Activated CD4-positive, alpha-beta T cell treated with anti-CD3 and anti-CD28 coated beads for 36 hours (primary cell): ENCODE measurements at regions of chr2 and their contacts with region 1.

Region 1: DNA sequence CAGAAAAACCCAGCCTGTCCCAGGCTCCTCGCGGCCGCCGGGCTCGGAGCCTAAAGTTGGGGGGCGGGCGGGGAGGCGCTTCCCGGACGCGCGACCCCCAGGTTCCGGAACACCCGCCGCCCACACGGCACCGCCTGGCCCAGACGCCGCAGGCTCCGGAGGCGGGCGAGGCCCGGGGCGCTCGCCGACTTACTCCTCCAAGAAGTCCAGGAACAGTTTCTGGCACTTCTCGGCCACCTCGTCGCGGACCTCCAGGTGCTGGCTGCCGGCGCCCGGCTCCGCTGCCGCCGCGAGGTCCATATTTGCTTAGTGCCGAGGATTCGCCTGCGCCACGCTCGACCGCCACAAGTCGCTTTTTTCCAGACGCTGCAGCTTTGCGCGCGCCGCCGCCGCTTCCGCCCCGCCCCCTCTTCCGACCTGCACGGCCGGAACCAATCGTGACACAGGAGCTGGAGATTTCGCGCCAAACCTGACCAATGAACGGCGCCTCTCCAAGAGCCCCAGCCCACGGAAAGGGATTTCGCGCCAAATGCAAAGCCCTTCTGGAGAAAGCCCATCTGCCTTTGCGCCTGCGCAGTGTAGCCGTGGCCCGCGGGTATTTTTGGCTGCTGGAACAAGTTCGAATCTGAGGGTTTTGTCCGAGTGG is at the start of gene MCM6:
- DNase-seq: peak; percentile 100
- ATAC-seq: peak; percentile 88
- H3K4me3 Mint-ChIP-seq: peak within 1 kb of the TSS; percentile 86
- H3K27ac Mint-ChIP-seq: peak within 1 kb of the TSS; percentile 96
- H3K4me1 Mint-ChIP-seq: peaks cover 44% of the 10 kb centered on the region
- H3K27me3 Mint-ChIP-seq: no peaks in the 10 kb centered on the region
- total RNA-seq, gene MCM6: 228 to 276 TPM

Region 2: GRCh38 chr2:134918526-134919340 is 957.5 kb before region 1 on chr2 and contains the start of gene CCNT2:
- CTCF ChIA-PET with region 1: no interaction called
- POLR2A ChIA-PET with region 1: no interaction called
- intact Hi-C with region 1: loop called in 1 of 2 experiments (anchors 2 kb)
- DNase-seq: peak; percentile 100
- ATAC-seq: peak; percentile 89
- H3K4me3 Mint-ChIP-seq: peak within 1 kb of the TSS; percentile 92
- H3K27ac Mint-ChIP-seq: peak within 1 kb of the TSS; percentile 98
- H3K4me1 Mint-ChIP-seq: peaks cover 27% of the 10 kb centered on the region
- H3K27me3 Mint-ChIP-seq: no peaks in the 10 kb centered on the region
- total RNA-seq, gene CCNT2: 29.3 to 36.6 TPM

Region 3: GRCh38 chr2:135741395-135742324 is 134.5 kb before region 1 on chr2 and contains the start of gene UBXN4:
- CTCF ChIA-PET with region 1: interaction called, 3 read pairs
- POLR2A ChIA-PET with region 1: interaction called, 7 read pairs
- intact Hi-C with region 1: loop called (anchors 1 kb)
- DNase-seq: peak; percentile 98
- ATAC-seq: peak; percentile 93
- H3K4me3 Mint-ChIP-seq: peak within 1 kb of the TSS; percentile 97
- H3K27ac Mint-ChIP-seq: peak within 1 kb of the TSS; percentile 99
- H3K4me1 Mint-ChIP-seq: peaks cover 35% of the 10 kb centered on the region
- H3K27me3 Mint-ChIP-seq: no peaks in the 10 kb centered on the region
- total RNA-seq, gene UBXN4: 97.0 to 104 TPM

Region 4: DNA sequence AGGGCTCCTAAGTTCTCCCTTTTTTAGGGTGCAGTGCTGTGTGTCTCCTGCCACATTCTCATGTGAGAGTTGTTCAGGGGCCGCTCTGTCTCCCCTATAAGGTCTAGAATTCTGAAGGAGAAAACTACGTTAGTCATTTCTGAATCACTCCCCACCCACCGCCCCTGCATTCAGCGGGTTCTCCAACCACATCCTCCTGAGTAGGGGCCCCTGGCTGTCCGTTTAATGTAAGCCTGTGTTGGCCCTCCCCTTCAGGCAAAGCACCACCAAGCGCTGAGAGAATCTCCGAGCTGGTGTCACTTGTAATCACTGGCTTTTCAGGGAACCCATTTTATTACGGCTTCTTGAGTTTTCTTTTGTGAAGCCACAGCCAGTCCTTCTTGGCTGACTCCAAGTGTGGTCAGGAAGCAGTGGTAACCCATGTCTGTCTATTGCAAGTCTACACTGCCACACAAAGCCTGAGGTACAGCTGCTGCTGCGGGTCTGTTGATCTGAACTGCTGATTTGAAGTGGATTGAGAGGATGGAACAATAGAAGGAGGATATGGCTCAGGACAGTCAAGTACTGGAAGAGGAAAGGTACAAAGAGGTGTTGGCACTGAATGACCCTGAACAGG is 56.1 kb before region 1 on chr2:
- CTCF ChIA-PET with region 1: interaction called, 3 read pairs
- POLR2A ChIA-PET with region 1: no interaction called
- intact Hi-C with region 1: loop called (anchors 1 to 2 kb)
- DNase-seq: peak; percentile 94
- ATAC-seq: peak; percentile 93
- H3K4me3 Mint-ChIP-seq: peak overlapping the region; percentile 71
- H3K27ac Mint-ChIP-seq: peak overlapping the region; percentile 87
- H3K4me1 Mint-ChIP-seq: peaks cover 45% of the 10 kb centered on the region
- H3K27me3 Mint-ChIP-seq: no peaks in the 10 kb centered on the region

Region 5: DNA sequence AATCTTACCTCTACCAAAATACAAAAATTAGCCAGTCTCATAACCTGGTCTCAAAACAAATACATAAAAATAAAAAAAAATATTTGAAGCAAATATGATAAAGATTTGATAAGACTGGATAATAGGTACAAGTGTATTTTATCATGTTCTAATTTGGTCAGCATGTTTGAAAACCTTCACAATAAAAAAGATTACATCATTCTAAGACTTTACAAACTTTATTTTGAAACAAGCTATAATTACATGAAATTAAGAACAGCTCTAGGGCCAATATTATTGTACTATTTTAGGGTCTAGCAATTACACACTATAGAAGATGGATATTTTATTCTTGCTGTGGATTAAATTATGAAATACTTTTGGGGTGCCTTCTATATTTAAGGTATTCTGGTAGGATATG is 29.5 kb after region 1 on chr2:
- CTCF ChIA-PET with region 1: no interaction called
- POLR2A ChIA-PET with region 1: no interaction called
- intact Hi-C with region 1: no loop called
- DNase-seq: no peak
- ATAC-seq: no peak
- H3K4me3 Mint-ChIP-seq: no peak overlapping the region
- H3K27ac Mint-ChIP-seq: no peak overlapping the region
- H3K4me1 Mint-ChIP-seq: peaks cover 3% of the 10 kb centered on the region
- H3K27me3 Mint-ChIP-seq: no peaks in the 10 kb centered on the region

Region 6: DNA sequence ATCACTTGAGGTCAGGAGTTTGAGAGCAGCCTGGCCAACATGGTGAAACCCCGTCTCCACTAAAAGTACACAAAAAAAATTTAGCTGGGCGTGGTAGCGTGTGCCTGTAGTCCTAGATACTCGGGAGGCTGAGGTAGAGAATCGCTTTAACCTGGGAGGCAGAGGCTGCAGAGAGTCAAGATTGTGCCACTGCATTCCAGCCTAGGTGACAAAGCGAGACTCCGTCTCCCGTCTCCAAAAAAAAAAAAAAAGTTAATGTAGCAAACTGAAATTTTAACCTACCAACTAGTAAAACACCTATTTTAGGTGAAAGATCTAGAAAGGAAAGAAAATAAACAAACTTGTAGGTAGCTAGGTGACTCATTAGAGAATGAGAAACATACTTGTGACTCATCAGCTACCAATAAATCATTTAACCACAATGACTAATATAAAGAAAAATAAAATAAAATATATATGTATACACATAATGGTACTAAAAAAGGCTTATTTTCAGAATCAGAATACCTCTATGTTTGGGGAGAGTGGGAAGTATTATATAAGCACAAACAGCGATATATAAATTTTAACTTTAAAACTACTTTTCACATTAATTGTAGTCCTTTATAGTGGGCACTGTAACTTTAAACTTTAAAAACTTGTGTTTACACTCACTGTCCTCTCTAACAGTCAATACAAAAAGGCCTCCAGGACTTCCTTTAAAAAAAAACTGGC is 72.6 kb after region 1 on chr2:
- CTCF ChIA-PET with region 1: no interaction called
- POLR2A ChIA-PET with region 1: no interaction called
- intact Hi-C with region 1: loop called in 1 of 2 experiments (anchors 1 kb)
- DNase-seq: no peak
- ATAC-seq: peak; percentile 81
- H3K4me3 Mint-ChIP-seq: peak overlapping the region; percentile 39
- H3K27ac Mint-ChIP-seq: peak overlapping the region; percentile 84
- H3K4me1 Mint-ChIP-seq: peaks cover 55% of the 10 kb centered on the region
- H3K27me3 Mint-ChIP-seq: no peaks in the 10 kb centered on the region

Region 7: GRCh38 chr2:136378712-136379595 is 502.8 kb after region 1 on chr2:
- CTCF ChIA-PET with region 1: interaction called, 3 read pairs
- POLR2A ChIA-PET with region 1: interaction called, 11 read pairs
- intact Hi-C with region 1: loop called (anchors 1 kb)
- DNase-seq: peak; percentile 87
- ATAC-seq: peak; percentile 11
- H3K4me3 Mint-ChIP-seq: no peak overlapping the region
- H3K27ac Mint-ChIP-seq: no peak overlapping the region
- H3K4me1 Mint-ChIP-seq: peaks cover 82% of the 10 kb centered on the region
- H3K27me3 Mint-ChIP-seq: no peaks in the 10 kb centered on the region